ENCODE measurements at regions of chr3 and their contacts with region 1.

Region 1: DNA sequence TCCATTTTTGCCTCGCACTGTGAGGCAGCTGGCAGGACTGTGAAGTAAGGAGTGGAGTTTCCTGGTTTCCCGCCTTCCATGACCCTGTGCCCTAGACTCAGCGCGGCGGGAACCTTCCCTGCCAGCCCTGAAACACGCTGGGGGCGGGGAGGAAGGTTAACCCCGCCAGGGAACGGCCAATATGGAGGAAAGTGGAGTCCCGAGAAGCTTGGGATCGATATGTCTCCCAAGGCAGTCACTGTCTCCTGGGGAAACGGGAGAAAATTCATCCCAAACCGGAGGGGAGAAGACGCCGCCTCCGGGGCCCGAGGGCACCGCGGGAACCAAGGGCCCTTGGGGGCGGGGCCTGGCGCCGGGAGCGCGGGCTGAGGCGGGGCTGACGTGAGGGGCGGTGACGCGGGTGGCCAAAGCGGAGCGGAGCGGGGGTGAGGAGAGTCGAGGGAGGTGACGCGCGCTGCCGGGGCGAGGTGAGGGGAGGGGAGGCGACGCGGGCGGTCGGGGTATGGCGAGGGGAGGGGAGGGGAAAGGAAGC is at the start of gene HMCES:
- H3K4me3 Mint-ChIP-seq: peak within 1 kb of the TSS; percentile 88
- H3K27ac Mint-ChIP-seq: peak within 1 kb of the TSS; percentile 90
- H3K4me1 Mint-ChIP-seq: peaks cover 34% of the 10 kb centered on the region
- H3K27me3 Mint-ChIP-seq: peaks cover 5% of the 10 kb centered on the region

Region 2: DNA sequence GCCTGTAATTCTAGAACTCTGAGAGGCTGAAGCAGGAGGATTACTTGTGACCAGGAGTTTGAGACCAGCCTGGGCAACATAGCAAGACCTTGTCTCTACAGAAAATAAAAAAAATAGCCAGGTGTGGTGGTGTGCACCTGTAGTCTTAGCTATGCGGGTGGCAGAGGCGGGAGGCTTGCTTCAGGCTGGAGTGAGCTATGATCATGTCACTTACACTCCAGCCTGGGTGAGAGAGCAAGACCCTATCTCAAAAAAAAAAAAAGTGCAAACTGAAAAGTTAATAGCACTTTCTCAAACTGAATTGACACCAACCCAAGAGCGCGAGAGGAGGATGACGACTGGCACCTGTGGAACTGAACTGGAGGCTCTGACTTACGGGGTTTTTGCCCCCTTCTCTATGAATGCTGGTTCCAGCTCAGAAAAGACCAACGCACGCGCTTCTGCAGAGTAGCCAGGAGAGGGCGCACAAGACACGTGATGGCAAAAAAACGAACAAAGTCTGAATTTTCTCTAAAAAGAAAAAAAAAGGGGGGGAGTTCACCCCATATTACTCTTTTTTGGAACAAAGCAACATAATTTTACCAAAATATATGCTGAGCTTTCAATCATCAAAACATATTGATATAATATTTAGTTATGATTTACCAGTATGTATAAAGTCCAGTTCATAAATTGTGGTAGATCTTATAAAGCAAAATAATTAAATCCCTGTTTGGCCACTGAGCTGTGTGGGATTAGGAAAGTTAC is 308.3 kb before region 1 on chr3:
- intact Hi-C with region 1: loop called (anchors 10 kb)
- H3K4me3 Mint-ChIP-seq: no peak overlapping the region
- H3K27ac Mint-ChIP-seq: no peak overlapping the region
- H3K4me1 Mint-ChIP-seq: peaks cover 9% of the 10 kb centered on the region
- H3K27me3 Mint-ChIP-seq: peaks cover 3% of the 10 kb centered on the region

Region 3: DNA sequence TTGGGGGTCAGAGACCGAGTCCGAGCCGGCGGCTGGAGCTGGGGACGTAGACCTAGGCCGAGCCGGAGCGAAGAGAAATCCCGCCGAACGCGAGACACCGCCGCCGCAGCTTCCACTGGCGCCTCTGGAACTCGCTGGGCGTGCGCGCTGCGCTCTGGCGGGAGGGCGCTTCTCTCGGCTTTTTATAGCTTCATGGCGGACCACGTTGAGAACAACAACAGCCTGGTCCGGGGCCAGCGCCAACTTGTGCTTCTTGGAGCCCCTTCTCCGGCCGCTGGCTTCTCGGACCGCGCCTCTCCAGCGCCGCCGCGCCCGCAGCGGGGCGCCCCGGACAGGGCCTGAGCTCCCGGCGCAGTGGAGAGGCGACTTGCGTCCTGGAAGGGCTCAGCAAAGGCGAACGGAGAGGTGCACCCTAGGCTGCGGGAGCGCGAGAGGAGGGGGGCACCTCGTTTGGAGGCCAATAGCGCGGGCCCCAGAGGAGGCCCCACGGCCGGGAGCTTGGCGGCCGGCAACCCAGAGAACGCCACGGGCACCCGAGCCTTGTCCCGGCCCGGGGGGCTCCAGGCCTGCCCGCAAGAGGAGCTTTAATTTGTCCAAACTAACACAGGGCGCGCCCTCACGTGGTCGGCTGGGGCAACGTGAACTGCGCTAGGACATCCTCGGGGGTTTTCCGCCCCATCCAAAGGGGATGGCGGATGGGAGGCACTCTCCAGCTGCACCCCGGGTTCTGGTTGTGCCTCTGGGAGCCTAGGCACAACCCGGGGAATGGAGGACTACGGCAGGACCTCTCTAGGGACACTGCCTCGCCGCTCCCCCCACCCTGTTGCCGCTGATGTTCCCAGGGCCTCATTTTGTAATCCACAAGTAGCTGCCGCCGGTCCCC is 37.9 kb after region 1 on chr3:
- intact Hi-C with region 1: loop called (anchors 2 kb)
- H3K4me3 Mint-ChIP-seq: peak overlapping the region; percentile 75
- H3K27ac Mint-ChIP-seq: peak overlapping the region; percentile 87
- H3K4me1 Mint-ChIP-seq: peaks cover 26% of the 10 kb centered on the region
- H3K27me3 Mint-ChIP-seq: peaks cover 4% of the 10 kb centered on the region

Region 4: GRCh38 chr3:129549412-129550204 is 271.1 kb after region 1 on chr3:
- intact Hi-C with region 1: no loop called
- H3K4me3 Mint-ChIP-seq: no peak overlapping the region
- H3K27ac Mint-ChIP-seq: no peak overlapping the region
- H3K4me1 Mint-ChIP-seq: peaks cover 40% of the 10 kb centered on the region
- H3K27me3 Mint-ChIP-seq: no peaks in the 10 kb centered on the region